Psoas muscle (tissue), 8 donors: ENCODE measurements at regions of chr9 and their contacts with region 1.

Region 1: GRCh38 chr9:33101108-33101951 is 24.9 kb upstream of the SMU1 start:
- DNase-seq: peak; percentile 68 to 83
- ATAC-seq: peak; percentile 96 to 97 (median 96)
- H3K4me3 ChIP-seq: no peak overlapping the region
- H3K27ac ChIP-seq: peak overlapping the region; percentile 79
- H3K4me1 ChIP-seq: peaks cover 23% of the 10 kb centered on the region
- H3K27me3 ChIP-seq: no peaks in the 10 kb centered on the region
- CTCF ChIP-seq: no peak

Region 2: DNA sequence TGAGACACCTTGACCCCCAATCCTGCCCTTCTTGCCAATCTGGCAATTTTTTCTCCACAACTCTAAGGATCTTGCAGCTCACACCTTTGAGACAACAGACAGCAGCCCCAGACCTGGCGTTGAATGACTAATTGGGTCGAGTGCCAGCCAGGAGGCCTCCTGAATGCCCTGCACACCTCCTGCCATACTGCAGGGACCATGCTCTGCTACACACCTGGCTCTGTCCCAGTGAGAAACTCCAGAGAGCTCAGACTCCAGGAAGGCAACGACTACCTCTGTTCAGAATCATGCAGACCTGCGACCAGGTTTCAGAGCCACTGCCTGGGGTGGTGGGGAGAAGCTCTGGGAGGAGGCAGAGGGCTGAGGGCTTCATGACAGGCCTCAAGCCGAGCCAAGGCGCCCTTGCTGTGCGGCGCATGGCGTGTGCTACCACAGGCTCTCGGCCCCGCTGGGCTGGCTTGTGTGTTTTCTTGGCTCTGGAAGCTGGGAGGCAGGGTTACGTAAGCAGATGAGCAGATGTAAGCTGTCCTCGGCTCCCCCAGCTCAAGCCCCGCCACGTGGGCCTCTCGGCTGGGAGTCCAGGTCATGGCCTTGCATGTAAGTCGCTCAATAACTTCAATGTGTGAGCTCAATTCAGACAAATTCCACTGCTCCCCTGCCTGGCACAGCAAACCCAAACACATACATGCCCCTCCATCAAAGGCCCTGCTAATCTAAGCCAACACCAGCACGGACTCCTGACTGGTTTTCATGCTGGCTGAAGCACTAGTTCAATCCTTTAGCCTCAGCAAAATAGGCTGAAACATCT is 38.3 kb after region 1 on chr9:
- intact Hi-C with region 1: loop called in 1 of 2 experiments (anchors 5 kb)
- DNase-seq: peak; percentile 85 to 89
- ATAC-seq: peak; percentile 89 to 94 (median 92)
- H3K4me3 ChIP-seq: peak overlapping the region; percentile 45
- H3K27ac ChIP-seq: peak overlapping the region; percentile 72
- H3K4me1 ChIP-seq: peaks cover 75% of the 10 kb centered on the region
- H3K27me3 ChIP-seq: no peaks in the 10 kb centered on the region
- CTCF ChIP-seq: no peak

Region 3: DNA sequence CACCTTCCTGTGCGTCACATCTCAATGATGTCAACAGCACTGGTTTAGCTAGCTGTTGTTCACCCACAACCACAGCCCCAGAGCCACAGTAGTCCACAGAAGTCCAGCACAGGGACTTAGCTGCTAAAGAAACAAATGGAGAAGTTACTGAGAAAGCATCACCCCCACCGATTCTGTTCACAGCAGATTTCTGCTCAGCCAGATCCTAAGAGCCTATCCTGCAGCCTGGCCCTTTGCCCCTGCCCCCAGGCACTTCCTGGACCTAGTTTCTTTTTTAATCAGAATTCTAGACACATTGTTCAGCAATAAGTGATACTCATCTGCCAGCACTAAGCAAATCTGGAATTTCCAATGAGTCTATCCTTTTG is 58.4 kb after region 1 on chr9:
- intact Hi-C with region 1: loop called in 1 of 2 experiments (anchors 5 kb)
- DNase-seq: peak; percentile 55 to 72
- ATAC-seq: no peak
- H3K4me3 ChIP-seq: peak overlapping the region; percentile 26
- H3K27ac ChIP-seq: peak overlapping the region; percentile 95
- H3K4me1 ChIP-seq: peaks cover 98% of the 10 kb centered on the region
- H3K27me3 ChIP-seq: no peaks in the 10 kb centered on the region
- CTCF ChIP-seq: no peak